Activated naive CD4-positive, alpha-beta T cell treated with anti-CD3 and anti-CD28 coated beads for 36 hours (primary cell): ENCODE measurements at regions of chr7 and their contacts with region 1.

Region 1: DNA sequence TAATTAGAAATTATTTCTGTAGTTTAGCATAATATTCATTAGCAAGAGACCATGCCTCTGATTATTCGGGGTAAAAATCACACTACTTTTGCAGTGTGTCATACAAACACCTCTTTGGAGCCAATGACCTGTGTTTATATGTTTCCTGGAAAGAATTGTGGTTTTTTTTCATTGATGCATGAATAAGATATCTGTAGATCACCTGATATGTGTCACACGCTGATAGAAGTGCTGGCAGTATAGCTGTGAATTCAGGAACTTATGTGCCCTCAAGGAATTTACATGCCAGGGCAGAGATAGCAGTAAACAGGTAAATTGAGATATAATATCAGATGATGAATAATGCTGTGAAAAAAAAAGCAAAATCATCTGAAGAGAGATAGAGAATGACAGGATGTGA is 118.2 kb downstream of the VPS50 start:
- DNase-seq: no peak
- H3K4me3 Mint-ChIP-seq: no peak overlapping the region
- H3K27ac Mint-ChIP-seq: peak overlapping the region; percentile 13
- H3K4me1 Mint-ChIP-seq: no peaks in the 10 kb centered on the region
- H3K27me3 Mint-ChIP-seq: no peaks in the 10 kb centered on the region

Region 2: GRCh38 chr7:93231799-93232672 is 118.3 kb before region 1 on chr7 and contains the start of gene VPS50:
- CTCF ChIA-PET with region 1: no interaction called
- intact Hi-C with region 1: no loop called
- DNase-seq: peak; percentile 96
- H3K4me3 Mint-ChIP-seq: peak within 1 kb of the TSS; percentile 96
- H3K27ac Mint-ChIP-seq: peak within 1 kb of the TSS; percentile 83
- H3K4me1 Mint-ChIP-seq: peaks cover 10% of the 10 kb centered on the region
- H3K27me3 Mint-ChIP-seq: no peaks in the 10 kb centered on the region
- total RNA-seq, gene VPS50: 15.0 to 15.8 TPM

Region 3: DNA sequence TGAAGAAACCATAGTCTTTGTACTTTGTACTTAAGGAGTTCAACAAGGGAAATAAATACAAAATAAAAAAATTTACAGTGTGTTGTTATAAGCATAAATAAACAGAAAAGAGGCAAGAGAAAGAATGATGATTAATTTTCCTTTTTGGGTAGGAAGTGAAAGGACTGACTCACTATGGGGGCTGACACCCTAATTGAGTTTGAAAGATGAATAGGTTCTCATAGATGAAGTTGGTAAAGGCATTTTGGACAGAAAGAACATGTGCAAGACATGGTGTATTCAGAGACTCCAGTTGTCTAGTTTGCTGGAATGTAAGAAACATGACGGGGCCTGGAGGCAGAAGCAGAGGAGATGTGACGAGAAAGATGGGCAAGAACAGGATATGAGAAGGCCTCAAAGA is 34.4 kb before region 1 on chr7:
- CTCF ChIA-PET with region 1: interaction called, 3 read pairs
- intact Hi-C with region 1: loop called (anchors 5 kb)
- DNase-seq: no peak
- H3K4me3 Mint-ChIP-seq: no peak overlapping the region
- H3K27ac Mint-ChIP-seq: no peak overlapping the region
- H3K4me1 Mint-ChIP-seq: peaks cover 10% of the 10 kb centered on the region
- H3K27me3 Mint-ChIP-seq: no peaks in the 10 kb centered on the region